ENCODE measurements at regions of chr5 and their contacts with region 1.

Region 1: DNA sequence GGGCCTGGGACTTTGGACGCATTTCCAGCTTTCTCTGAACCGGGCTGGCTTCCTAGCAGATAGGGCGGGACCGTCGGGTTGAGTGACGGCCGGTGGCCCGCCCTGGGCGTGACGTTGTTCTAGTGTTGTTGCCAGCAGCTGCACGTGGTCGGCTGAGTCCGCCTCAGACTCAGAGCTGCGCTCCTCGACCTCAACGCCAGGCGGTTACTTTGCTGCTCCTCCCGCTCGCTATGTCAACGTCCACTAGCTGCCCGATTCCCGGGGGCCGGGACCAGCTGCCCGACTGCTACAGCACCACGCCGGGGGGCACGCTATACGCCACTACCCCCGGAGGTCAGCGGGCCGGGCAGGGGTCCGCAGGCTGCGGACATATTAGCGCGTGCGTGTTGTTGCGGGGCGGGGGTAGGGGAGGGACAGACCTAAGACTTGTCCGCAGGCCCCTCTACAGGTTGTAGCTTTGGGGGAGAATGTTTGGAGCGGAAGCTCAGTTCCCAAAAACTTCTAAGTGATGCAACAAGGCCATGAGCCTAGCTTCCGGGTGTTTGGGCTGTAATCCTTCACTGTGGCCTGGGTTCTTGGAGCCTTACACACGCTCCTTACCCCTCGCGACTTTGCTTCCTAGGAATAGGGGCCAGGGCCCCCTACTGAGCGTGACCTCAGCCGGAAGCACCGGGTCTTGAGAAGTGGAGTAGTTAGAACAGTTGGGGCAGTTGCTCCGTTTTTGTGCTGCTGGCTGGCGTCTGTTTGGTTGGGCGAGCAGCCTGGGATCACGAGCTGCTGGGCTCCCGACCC is at the start of gene EIF4EBP3:
- DNase-seq: peak; percentile 77
- H3K4me3 ChIP-seq: peak within 1 kb of the TSS; percentile 49
- CTCF ChIP-seq: peak; percentile 70

Region 2: GRCh38 chr5:140564196-140565023 is 16.7 kb after region 1 on chr5 and contains the starts of genes APBB3 and SLC35A4:
- CTCF ChIA-PET with region 1: interaction called, 19 read pairs
- POLR2A ChIA-PET with region 1: interaction called, 11 read pairs
- DNase-seq: peak; percentile 94
- H3K4me3 ChIP-seq: peak within 1 kb of the TSS; percentile 96
- CTCF ChIP-seq: no peak

Measured in AG04449 (cell line).